ENCODE measurements at regions of chr2 and their contacts with region 1.

Region 1: GRCh38 chr2:70948337-70949003 is 12.8 kb downstream of the ATP6V1B1 start:
- DNase-seq: peak; percentile 84 to 89 (median 86)
- ATAC-seq: peak; percentile 99
- H3K4me3 ChIP-seq: peak overlapping the region; percentile 4
- H3K27ac ChIP-seq: no peak overlapping the region
- H3K4me1 ChIP-seq: peaks cover 2 to 11% of the 10 kb centered on the region in 2 experiments; a peak in 3 of 5 replicates
- H3K27me3 ChIP-seq: peaks cover 2 to 19% of the 10 kb centered on the region in 2 experiments; a peak in 2 of 5 replicates
- CTCF ChIP-seq: peak; percentile 77 to 91 (median 90)
- EP300 ChIP-seq: no peak
- POLR2A ChIP-seq: no peak
- RAD21 ChIP-seq: peak in 1 of 2 experiments; percentile 59; a peak in 3 of 4 replicates

Region 2: GRCh38 chr2:70310899-70311298 is 637.6 kb before region 1 on chr2:
- CTCF ChIA-PET with region 1: interaction called, 5 read pairs
- POLR2A ChIA-PET with region 1: no interaction called
- in situ Hi-C with region 1: loop called (anchors 10 kb)
- intact Hi-C with region 1: loop called (anchors 10 kb)
- DNase-seq: no peak
- ATAC-seq: peak; percentile 56; the same call in 2 of the 3 replicates
- H3K4me3 ChIP-seq: no peak overlapping the region
- H3K27ac ChIP-seq: no peak overlapping the region
- H3K4me1 ChIP-seq: peaks cover 0 to 3% of the 10 kb centered on the region in 2 experiments; a peak in 1 of 5 replicates
- H3K27me3 ChIP-seq: peaks cover 9 to 11% of the 10 kb centered on the region in 2 experiments; a peak in 4 of 5 replicates
- CTCF ChIP-seq: no peak
- EP300 ChIP-seq: no peak
- POLR2A ChIP-seq: no peak
- RAD21 ChIP-seq: no peak

Region 3: GRCh38 chr2:70553584-70554337 is 394.7 kb before region 1 on chr2 and contains the start of gene TGFA:
- CTCF ChIA-PET with region 1: no interaction called
- POLR2A ChIA-PET with region 1: no interaction called
- in situ Hi-C with region 1: no loop called
- intact Hi-C with region 1: no loop called
- DNase-seq: peak; percentile 36 to 61 (median 54)
- ATAC-seq: peak; percentile 98
- H3K4me3 ChIP-seq: 0 out of 2 replicates have a peak within 1 kb of the TSS, but pooled peaks have one; percentile 10
- H3K27ac ChIP-seq: no peak within 1 kb of the TSS
- H3K4me1 ChIP-seq: peaks cover 0 to 15% of the 10 kb centered on the region in 2 experiments; a peak in 2 of 5 replicates
- H3K27me3 ChIP-seq: peaks cover 41 to 57% of the 10 kb centered on the region in 2 experiments
- CTCF ChIP-seq: peak; percentile 64 to 84 (median 71)
- EP300 ChIP-seq: no peak
- POLR2A ChIP-seq: no peak
- RAD21 ChIP-seq: peak in 1 of 2 experiments; percentile 36; a peak in 2 of 4 replicates
- polyA plus RNA-seq, gene TGFA: not detected

Region 4: DNA sequence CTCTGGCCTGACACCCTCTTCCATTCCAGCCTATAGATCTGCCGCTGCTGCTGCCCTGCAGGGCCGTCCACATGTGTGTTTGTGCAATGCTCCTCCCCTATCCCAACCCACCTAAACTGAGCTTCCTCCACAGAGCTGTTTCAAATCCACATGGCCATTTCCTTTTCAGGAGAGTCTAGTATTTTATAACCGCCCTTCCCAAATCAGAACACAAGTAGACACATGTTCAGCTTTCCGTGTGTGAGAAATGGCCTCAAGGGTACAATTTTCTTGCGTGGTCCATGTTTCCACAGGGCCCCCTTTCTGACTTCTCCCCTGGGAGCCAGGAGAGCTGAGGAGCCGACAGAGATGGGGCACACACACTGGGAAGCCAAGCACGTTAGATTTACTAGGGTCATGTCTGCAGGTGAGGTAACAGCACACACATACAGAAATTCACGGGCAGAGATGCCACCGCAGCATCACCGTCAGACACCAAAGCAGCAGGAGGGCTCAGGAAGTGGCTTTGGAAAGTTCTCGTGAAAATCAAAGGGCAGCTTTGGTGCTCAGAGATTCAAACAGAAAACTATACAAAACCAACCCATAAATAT is 292.0 kb before region 1 on chr2:
- CTCF ChIA-PET with region 1: interaction called, 9 read pairs
- POLR2A ChIA-PET with region 1: no interaction called
- in situ Hi-C with region 1: loop called (anchors 10 kb)
- intact Hi-C with region 1: loop called (anchors 2 kb)
- DNase-seq: no peak
- ATAC-seq: no peak
- H3K4me3 ChIP-seq: no peak overlapping the region
- H3K27ac ChIP-seq: no peak overlapping the region
- H3K4me1 ChIP-seq: no peaks in the 10 kb centered on the region; a peak in 1 of 5 replicates
- H3K27me3 ChIP-seq: no peaks in the 10 kb centered on the region; a peak in 1 of 5 replicates
- CTCF ChIP-seq: no peak
- EP300 ChIP-seq: no peak
- POLR2A ChIP-seq: no peak
- RAD21 ChIP-seq: no peak

Region 5: DNA sequence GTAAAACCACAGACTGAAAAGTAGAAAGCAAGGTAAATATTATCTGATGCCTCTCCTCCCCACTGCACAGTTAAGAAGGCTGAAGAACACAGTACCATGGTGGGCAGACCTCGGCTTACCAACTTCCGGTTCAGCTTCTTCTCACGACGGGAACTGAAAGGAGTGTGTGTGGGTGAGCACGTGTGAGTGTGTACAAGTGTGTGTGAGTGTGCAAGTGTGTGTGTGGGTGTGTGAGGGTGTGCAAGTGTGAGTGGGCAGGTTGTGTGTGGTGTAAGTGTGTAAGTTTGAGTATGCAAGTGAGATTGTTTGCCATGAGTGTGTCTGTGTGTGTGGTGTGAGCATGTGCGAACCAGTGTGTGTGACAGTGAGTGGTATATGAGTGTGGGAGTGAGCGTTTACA is 283.9 kb before region 1 on chr2:
- CTCF ChIA-PET with region 1: no interaction called
- POLR2A ChIA-PET with region 1: interaction called, 4 read pairs
- in situ Hi-C with region 1: loop called (anchors 10 kb)
- intact Hi-C with region 1: no loop called
- DNase-seq: no peak
- ATAC-seq: no peak
- H3K4me3 ChIP-seq: no peak overlapping the region
- H3K27ac ChIP-seq: no peak overlapping the region
- H3K4me1 ChIP-seq: no peaks in the 10 kb centered on the region
- H3K27me3 ChIP-seq: no peaks in the 10 kb centered on the region
- CTCF ChIP-seq: no peak
- EP300 ChIP-seq: no peak
- POLR2A ChIP-seq: no peak
- RAD21 ChIP-seq: no peak

Region 6: GRCh38 chr2:70789304-70790135 is 158.9 kb before region 1 on chr2:
- CTCF ChIA-PET with region 1: interaction called, 7 read pairs
- POLR2A ChIA-PET with region 1: no interaction called
- in situ Hi-C with region 1: loop called (anchors 5 kb)
- intact Hi-C with region 1: loop called (anchors 2 kb)
- DNase-seq: peak; percentile 52 to 78 (median 62)
- ATAC-seq: peak; percentile 90
- H3K4me3 ChIP-seq: no peak overlapping the region
- H3K27ac ChIP-seq: no peak overlapping the region
- H3K4me1 ChIP-seq: peaks cover 0 to 10% of the 10 kb centered on the region in 2 experiments; a peak in 3 of 5 replicates
- H3K27me3 ChIP-seq: peaks cover 6 to 16% of the 10 kb centered on the region in 2 experiments
- CTCF ChIP-seq: peak; percentile 86 to 87 (median 86)
- EP300 ChIP-seq: no peak
- POLR2A ChIP-seq: no peak
- RAD21 ChIP-seq: peak; percentile 53 to 77

Region 7: DNA sequence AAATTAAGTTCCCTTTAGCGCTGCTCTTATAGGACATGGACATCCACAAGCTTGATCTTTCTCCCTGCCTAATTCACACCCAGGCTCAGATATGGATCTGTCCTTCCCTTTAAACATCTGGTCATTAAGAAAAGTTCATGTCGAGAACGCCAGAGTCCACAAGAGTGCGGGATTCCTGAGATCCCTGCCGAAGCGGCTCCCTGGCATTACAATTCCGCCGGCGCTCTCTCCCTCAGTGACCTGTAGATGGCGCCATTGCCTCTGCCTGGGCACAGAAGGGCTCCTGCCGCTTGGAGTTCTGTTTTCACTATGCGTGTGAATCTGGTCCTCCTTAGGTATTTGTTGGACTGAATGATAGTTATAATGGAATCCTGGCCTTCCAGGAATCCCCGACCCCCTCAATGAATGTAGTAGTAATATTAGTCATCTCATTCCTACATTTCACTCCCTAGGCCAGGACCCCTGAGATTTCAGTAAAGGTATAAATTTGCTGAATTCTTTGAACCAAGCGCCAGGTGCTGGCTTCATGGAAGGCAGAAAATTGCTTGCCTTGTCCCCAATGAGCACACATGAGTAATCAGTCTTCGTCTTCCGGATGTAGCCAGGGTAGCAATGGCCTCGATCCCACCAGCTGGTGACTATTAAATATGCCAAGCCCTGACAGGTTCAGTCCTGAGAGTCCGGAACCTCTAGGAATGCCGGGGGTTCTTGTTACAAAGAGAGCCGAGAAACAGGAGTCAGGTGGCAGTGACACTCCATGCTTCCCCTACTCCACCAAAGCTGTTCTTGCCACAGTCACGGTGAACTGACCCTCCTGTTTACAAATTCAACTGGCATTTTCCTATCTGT is 86.5 kb before region 1 on chr2:
- CTCF ChIA-PET with region 1: interaction called, 42 read pairs
- POLR2A ChIA-PET with region 1: interaction called, 3 read pairs
- in situ Hi-C with region 1: loop called (anchors 5 kb)
- intact Hi-C with region 1: loop called (anchors 2 kb)
- DNase-seq: peak; percentile 79 to 88 (median 85)
- ATAC-seq: peak; percentile 99
- H3K4me3 ChIP-seq: no peak overlapping the region
- H3K27ac ChIP-seq: no peak overlapping the region
- H3K4me1 ChIP-seq: no peaks in the 10 kb centered on the region
- H3K27me3 ChIP-seq: peaks cover 31 to 40% of the 10 kb centered on the region in 2 experiments; a peak in 3 of 5 replicates
- CTCF ChIP-seq: peak; percentile 98
- EP300 ChIP-seq: no peak
- POLR2A ChIP-seq: no peak
- RAD21 ChIP-seq: peak; percentile 44 to 85; a peak in 3 of 4 replicates

Region 8: DNA sequence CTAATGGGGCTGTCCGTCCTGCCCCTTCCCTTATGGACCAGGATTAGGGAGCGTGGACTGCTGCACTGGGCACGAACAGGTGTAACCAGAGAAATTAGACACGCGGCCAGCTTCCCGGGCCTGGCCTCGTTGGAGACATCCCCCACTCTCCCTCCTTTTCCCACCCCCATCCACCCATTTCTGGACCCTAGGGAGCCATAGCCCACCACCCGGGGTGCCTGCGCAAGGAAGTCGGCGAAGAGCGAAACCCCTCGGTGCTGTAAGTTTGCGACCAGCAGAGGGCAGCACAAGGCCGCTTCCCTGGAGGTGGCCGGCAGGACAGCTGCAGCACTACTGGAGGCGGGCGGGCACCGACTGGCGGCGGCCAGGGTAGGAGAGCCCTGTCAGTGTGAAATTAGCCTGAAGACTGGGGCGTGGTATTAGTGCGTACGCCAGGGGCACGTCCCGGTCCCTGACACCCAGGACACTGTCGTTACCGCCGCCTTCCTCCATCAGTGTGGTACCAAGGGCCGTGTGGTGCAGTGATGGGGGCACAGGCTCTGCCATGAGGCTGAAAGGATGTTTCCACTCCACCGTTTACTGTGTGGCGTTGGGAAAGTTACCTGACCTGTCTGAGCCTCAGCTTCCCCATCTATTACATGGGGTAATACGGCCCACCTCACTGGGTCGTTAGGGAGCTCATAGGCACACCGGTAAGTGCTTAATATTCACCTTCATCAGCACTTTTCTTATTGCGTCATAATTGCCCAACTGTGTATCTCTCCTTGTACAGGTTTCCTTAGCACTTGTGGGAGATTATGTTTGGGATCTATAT is 76.9 kb before region 1 on chr2:
- CTCF ChIA-PET with region 1: interaction called, 48 read pairs
- POLR2A ChIA-PET with region 1: interaction called, 3 read pairs
- in situ Hi-C with region 1: loop called (anchors 5 kb)
- intact Hi-C with region 1: loop called (anchors 1 kb)
- DNase-seq: peak; percentile 78 to 86 (median 84)
- ATAC-seq: peak; percentile 99
- H3K4me3 ChIP-seq: no peak overlapping the region
- H3K27ac ChIP-seq: no peak overlapping the region
- H3K4me1 ChIP-seq: peaks cover 0 to 7% of the 10 kb centered on the region in 2 experiments; a peak in 1 of 5 replicates
- H3K27me3 ChIP-seq: peaks cover 2 to 30% of the 10 kb centered on the region in 2 experiments; a peak in 4 of 5 replicates
- CTCF ChIP-seq: peak; percentile 89 to 98 (median 92)
- EP300 ChIP-seq: no peak
- POLR2A ChIP-seq: no peak
- RAD21 ChIP-seq: peak; percentile 67 to 88

Region 9: DNA sequence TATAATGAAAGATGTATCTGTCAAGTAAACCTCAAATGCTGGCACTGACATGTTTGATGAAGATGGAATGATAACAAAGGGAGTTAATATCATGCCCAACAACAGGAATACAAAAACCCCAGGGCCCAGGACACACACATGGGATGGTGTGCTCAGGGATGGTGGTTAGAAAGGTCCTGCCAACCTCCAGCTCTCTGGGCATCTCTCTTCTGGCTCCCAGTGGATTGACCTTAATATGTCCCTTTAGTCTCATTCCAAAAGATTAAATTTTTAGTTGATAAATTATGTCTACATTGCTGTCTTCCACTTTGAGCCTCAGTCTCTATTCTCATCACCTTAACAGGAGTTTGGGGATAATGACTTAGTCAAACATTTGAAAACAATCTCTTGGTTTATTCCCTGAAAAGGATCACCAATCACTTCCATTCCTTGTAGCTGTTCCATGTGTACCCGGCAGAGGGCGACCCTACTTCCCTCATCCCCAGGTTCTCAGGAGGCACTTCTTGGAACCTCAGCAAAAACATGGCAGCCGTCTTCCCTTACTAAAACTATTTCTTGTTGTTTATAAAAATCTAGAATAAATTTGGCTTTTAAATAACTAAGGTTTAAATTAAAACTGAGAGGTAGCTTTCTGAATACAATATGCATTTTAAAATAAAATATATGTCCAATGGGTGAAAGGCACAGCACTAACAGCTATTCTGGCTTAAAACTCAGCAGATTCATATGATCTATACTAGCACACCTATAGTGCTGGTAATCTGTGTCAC is 151.9 kb after region 1 on chr2:
- CTCF ChIA-PET with region 1: no interaction called
- POLR2A ChIA-PET with region 1: no interaction called
- in situ Hi-C with region 1: no loop called
- intact Hi-C with region 1: no loop called
- DNase-seq: peak; percentile 79 to 85 (median 84)
- ATAC-seq: peak; percentile 95
- H3K4me3 ChIP-seq: no peak overlapping the region
- H3K27ac ChIP-seq: no peak overlapping the region
- H3K4me1 ChIP-seq: no peaks in the 10 kb centered on the region
- H3K27me3 ChIP-seq: no peaks in the 10 kb centered on the region
- CTCF ChIP-seq: peak; percentile 73 to 88 (median 82); a peak in 5 of 6 replicates
- EP300 ChIP-seq: no peak
- POLR2A ChIP-seq: no peak
- RAD21 ChIP-seq: peak; percentile 36 to 72; a peak in 3 of 4 replicates

Region 10: DNA sequence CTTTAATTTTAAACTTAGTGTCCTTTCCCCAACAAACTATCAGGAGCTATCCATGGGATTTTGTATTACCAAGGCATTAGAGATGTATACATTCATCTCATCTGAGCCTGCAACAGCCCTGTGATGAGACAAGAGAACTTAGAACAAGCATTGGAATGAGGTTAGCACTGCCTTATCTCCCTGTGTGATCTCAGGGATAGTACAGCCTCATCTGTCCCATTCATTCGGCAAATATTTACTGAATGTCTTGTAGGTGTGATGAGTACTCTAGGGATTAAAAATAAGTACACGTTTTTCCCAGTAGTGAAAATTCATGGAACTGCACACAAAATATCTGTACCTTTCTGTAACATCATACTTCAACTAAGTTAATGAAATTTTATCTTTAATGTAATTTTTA is 232.9 kb after region 1 on chr2:
- CTCF ChIA-PET with region 1: no interaction called
- POLR2A ChIA-PET with region 1: no interaction called
- in situ Hi-C with region 1: no loop called
- intact Hi-C with region 1: no loop called
- DNase-seq: no peak
- ATAC-seq: no peak
- H3K4me3 ChIP-seq: no peak overlapping the region
- H3K27ac ChIP-seq: no peak overlapping the region
- H3K4me1 ChIP-seq: no peaks in the 10 kb centered on the region
- H3K27me3 ChIP-seq: peaks cover 4 to 20% of the 10 kb centered on the region in 2 experiments
- CTCF ChIP-seq: no peak
- EP300 ChIP-seq: no peak
- POLR2A ChIP-seq: no peak
- RAD21 ChIP-seq: no peak

Region 11: GRCh38 chr2:71336802-71337201 is 388.3 kb after region 1 on chr2:
- CTCF ChIA-PET with region 1: no interaction called
- POLR2A ChIA-PET with region 1: no interaction called
- in situ Hi-C with region 1: no loop called
- intact Hi-C with region 1: no loop called
- DNase-seq: no peak
- ATAC-seq: no peak
- H3K4me3 ChIP-seq: no peak overlapping the region
- H3K27ac ChIP-seq: no peak overlapping the region
- H3K4me1 ChIP-seq: peaks cover 4 to 18% of the 10 kb centered on the region in 2 experiments; a peak in 3 of 5 replicates
- H3K27me3 ChIP-seq: no peaks in the 10 kb centered on the region
- CTCF ChIP-seq: no peak
- EP300 ChIP-seq: no peak
- POLR2A ChIP-seq: no peak
- RAD21 ChIP-seq: no peak